Activated CD8-positive, alpha-beta T cell treated with anti-CD3 and anti-CD28 coated beads, Interleukin-2, amount 10 ng/mL, durations not matched to agents 7 days and 5 days (primary cell): ENCODE measurements at regions of chr12 and their contacts with region 1.

Region 1: GRCh38 chr12:54324617-54325441 is at the start of gene COPZ1:
- DNase-seq: peak; percentile 98
- ATAC-seq: peak; percentile 99
- H3K4me3 Mint-ChIP-seq: peak within 1 kb of the TSS; percentile 97
- H3K27ac Mint-ChIP-seq: peak within 1 kb of the TSS; percentile 92
- H3K4me1 Mint-ChIP-seq: peaks cover 38% of the 10 kb centered on the region
- H3K27me3 Mint-ChIP-seq: no peaks in the 10 kb centered on the region
- total RNA-seq, gene COPZ1: 105 to 112 TPM

Region 2: GRCh38 chr12:54191550-54192022 is 133.2 kb before region 1 on chr12:
- CTCF ChIA-PET with region 1: no interaction called
- POLR2A ChIA-PET with region 1: no interaction called
- DNase-seq: peak; percentile 85
- ATAC-seq: peak; percentile 66
- H3K4me3 Mint-ChIP-seq: no peak overlapping the region
- H3K27ac Mint-ChIP-seq: no peak overlapping the region
- H3K4me1 Mint-ChIP-seq: peaks cover 24% of the 10 kb centered on the region
- H3K27me3 Mint-ChIP-seq: peaks cover 50% of the 10 kb centered on the region

Region 3: DNA sequence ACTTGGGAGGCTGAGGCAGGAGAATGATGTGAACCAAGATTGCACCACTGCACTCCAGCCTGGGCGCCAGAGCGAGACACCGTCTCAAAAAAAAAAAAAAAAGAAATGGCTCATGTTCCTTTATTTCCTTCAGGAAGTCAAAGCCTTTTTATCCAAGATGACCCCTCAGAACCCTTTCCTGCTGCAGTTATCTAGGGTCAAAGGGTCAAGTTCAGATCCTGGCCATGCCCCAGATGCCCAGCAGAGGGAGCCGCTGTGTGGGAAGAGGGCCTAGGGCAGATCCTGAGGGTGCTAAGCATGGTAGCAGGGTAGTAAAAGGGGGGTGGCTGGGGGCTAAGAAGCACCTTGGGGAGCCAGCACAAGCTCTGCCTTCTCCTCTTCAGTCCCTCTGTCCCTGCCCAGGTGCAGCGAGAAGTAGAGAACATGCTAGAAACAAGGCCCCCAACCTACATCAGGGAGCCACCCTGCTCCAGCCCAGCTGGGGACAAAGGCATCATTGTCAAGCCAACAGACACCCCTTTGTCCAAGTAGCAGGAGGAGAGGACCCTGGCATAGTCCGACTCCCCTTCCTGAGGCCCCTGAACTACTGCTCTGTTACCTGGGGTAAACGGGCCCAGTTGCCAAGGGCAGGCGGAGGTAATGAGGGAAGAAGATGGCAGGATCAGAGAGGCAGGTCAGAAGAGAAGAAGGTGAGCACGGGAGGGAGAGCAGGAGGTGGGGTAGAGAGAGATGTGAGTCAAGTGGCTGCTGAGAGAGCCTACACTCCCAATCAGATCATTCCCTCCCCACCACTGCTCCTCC is 30.5 kb before region 1 on chr12:
- CTCF ChIA-PET with region 1: interaction called, 46 read pairs
- POLR2A ChIA-PET with region 1: no interaction called
- DNase-seq: peak; percentile 76
- ATAC-seq: peak; percentile 58
- H3K4me3 Mint-ChIP-seq: no peak overlapping the region
- H3K27ac Mint-ChIP-seq: no peak overlapping the region
- H3K4me1 Mint-ChIP-seq: peaks cover 5% of the 10 kb centered on the region
- H3K27me3 Mint-ChIP-seq: peaks cover 18% of the 10 kb centered on the region

Region 4: DNA sequence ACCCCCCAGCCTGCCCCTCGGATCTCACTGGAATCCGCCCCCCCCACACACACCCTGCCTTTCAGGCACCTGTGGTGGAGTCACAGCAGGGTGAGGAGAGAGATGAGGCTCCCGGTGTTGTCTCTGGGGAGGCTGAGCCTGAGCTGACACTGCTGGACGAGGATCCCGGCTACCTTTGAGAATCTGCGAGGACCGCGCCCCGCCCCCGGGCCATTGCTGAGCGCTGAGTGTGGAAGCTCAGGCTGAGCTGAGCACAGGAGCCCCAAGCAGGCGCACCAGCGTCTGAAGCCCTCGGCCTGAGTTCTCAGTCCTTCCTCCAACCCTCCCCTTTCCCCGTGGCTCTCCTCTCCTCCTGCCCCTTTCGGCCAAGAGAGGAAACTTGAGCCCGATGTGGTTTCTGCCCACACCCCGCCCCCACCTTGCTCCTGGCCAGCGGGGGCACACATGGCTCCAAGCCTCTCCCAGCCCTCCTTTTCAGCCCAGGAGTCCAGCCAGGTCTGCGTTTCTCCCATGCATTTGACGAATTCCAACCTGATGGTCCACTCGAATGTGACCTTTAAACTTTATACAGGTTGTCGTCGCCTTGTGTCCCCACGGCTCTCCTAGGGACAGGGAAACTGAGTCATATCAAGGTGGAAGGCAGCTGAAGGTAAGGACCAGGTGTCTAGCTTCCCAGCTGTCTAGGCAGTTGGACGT is 23.9 kb before region 1 on chr12 and contains the start of gene NFE2:
- CTCF ChIA-PET with region 1: interaction called, 46 read pairs
- POLR2A ChIA-PET with region 1: no interaction called
- DNase-seq: peak; percentile 35
- ATAC-seq: peak; percentile 64
- H3K4me3 Mint-ChIP-seq: no peak within 1 kb of the TSS
- H3K27ac Mint-ChIP-seq: no peak within 1 kb of the TSS
- H3K4me1 Mint-ChIP-seq: peaks cover 37% of the 10 kb centered on the region
- H3K27me3 Mint-ChIP-seq: peaks cover 67% of the 10 kb centered on the region
- total RNA-seq, gene NFE2: not detected

Region 5: DNA sequence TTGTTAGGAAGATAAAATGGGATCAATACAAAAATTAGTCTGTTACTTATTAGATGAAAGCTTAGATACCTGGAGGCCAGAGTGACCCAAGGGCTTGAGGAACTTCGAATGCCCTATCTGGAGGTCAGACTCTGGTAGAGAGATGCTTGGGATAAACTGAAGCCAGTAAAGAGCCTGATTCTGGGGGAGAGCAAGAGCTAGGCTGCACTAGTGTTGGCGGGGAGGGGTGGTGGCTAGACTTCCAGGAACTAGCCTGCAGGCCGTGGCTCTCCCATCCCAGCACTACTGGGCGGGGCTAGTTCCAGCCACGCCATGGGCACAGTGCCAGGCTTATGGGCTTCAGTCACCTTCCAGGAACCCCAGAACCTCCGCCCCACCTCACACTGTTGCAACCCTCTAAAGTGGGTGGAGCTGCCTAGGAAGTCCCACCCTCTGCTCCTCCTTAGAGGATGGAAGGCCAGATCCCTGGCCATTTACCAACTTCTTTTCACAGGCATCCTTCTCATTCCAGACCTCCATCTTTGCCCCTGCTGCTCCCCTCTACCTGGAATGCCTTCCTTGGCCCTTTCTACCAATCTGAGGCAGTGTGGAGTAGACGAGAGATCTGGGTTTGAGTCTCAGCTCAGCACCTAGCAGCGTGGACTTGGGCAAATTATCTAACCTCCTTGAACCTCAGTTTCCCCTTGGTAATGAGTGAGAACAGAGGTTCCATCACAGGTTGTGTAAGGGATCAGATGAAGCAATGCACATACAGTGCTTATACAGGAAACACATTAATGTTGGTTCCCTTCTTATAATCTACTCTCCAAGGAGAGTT is 17.7 kb before region 1 on chr12:
- CTCF ChIA-PET with region 1: interaction called, 20 read pairs
- POLR2A ChIA-PET with region 1: no interaction called
- DNase-seq: peak; percentile 50
- ATAC-seq: peak; percentile 70
- H3K4me3 Mint-ChIP-seq: no peak overlapping the region
- H3K27ac Mint-ChIP-seq: no peak overlapping the region
- H3K4me1 Mint-ChIP-seq: peaks cover 28% of the 10 kb centered on the region
- H3K27me3 Mint-ChIP-seq: peaks cover 25% of the 10 kb centered on the region

Region 6: GRCh38 chr12:54359033-54359761 is 34.4 kb after region 1 on chr12:
- CTCF ChIA-PET with region 1: interaction called, 28 read pairs
- POLR2A ChIA-PET with region 1: interaction called, 5 read pairs
- DNase-seq: peak; percentile 98
- ATAC-seq: peak; percentile 96
- H3K4me3 Mint-ChIP-seq: no peak overlapping the region
- H3K27ac Mint-ChIP-seq: no peak overlapping the region
- H3K4me1 Mint-ChIP-seq: peaks cover 30% of the 10 kb centered on the region
- H3K27me3 Mint-ChIP-seq: no peaks in the 10 kb centered on the region

Region 7: DNA sequence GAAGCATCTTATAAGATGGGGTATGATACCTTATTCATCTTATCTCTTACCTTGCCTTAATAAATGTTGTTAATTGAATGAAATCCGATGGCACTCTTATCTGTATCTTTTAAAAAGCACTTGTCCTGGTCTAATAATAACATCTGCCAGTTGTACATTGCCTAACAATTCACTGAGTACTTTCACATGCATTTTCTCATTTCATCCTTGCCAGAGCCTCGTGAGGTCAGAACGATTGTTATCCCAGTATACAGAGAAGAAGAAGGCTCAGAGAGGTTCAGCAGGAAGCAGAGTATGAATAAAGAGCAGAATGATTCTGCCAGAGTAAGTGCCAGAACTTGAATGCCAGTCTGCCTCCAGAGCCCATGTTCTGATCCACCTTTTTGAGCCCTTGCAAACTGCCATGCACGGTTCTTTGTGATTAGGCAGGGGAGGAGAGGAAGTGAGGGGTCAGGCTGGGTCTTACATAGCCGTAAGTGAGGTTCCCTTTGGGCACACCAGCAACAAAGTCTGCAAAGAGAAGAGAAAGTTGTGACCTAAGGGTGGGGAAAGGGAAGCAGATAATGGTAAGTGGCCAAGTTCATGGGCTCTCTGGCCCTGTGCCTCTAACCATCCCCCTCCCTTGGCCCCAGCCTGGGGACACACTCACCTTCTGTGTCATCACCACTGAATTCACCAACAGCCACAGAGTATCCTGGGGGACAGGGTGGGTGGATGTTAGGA is 82.5 kb after region 1 on chr12:
- CTCF ChIA-PET with region 1: no interaction called
- POLR2A ChIA-PET with region 1: no interaction called
- DNase-seq: no peak
- ATAC-seq: no peak
- H3K4me3 Mint-ChIP-seq: no peak overlapping the region
- H3K27ac Mint-ChIP-seq: peak overlapping the region; percentile 19
- H3K4me1 Mint-ChIP-seq: peaks cover 21% of the 10 kb centered on the region
- H3K27me3 Mint-ChIP-seq: no peaks in the 10 kb centered on the region